IMR-90 (cell line): ENCODE measurements at regions of chrX and their contacts with region 1.

Region 1: GRCh38 chrX:134026565-134027311 is 41.3 kb upstream of the GPC3 start:
- DNase-seq: peak; percentile 5
- ATAC-seq: 0 out of 2 replicates have a peak, but pooled peaks have one; percentile 51
- H3K4me3 ChIP-seq: no peak overlapping the region
- H3K27ac ChIP-seq: no peak overlapping the region
- H3K4me1 ChIP-seq: no peaks in the 10 kb centered on the region
- H3K27me3 ChIP-seq: no peaks in the 10 kb centered on the region
- CTCF ChIP-seq: peak; percentile 27; the same call in 1 of the 2 replicates
- POLR2A ChIP-seq: no peak
- RAD21 ChIP-seq: no peak

Region 2: GRCh38 chrX:133523081-133523487 is 503.7 kb before region 1 on chrX:
- CTCF ChIA-PET with region 1: no interaction called
- POLR2A ChIA-PET with region 1: interaction called, 12 read pairs
- dilution Hi-C with region 1: no loop called
- in situ Hi-C with region 1: no loop called
- intact Hi-C with region 1: no loop called
- DNase-seq: no peak
- ATAC-seq: no peak
- H3K4me3 ChIP-seq: no peak overlapping the region
- H3K27ac ChIP-seq: no peak overlapping the region
- H3K4me1 ChIP-seq: no peaks in the 10 kb centered on the region
- H3K27me3 ChIP-seq: peaks cover 2% of the 10 kb centered on the region; the same call in 1 of the 2 replicates
- CTCF ChIP-seq: no peak
- POLR2A ChIP-seq: no peak
- RAD21 ChIP-seq: no peak